Right cardiac atrium (tissue), 5 donors: ENCODE measurements at regions of chr20 and their contacts with region 1.

Region 1: GRCh38 chr20:54093423-54094267 is 23.3 kb upstream of the BCAS1 start:
- DNase-seq: no peak
- ATAC-seq: no peak
- H3K4me3 ChIP-seq: no peak overlapping the region
- H3K27ac ChIP-seq: no peak overlapping the region
- H3K4me1 ChIP-seq: no peaks in the 10 kb centered on the region
- H3K27me3 ChIP-seq: no peaks in the 10 kb centered on the region

Region 2: DNA sequence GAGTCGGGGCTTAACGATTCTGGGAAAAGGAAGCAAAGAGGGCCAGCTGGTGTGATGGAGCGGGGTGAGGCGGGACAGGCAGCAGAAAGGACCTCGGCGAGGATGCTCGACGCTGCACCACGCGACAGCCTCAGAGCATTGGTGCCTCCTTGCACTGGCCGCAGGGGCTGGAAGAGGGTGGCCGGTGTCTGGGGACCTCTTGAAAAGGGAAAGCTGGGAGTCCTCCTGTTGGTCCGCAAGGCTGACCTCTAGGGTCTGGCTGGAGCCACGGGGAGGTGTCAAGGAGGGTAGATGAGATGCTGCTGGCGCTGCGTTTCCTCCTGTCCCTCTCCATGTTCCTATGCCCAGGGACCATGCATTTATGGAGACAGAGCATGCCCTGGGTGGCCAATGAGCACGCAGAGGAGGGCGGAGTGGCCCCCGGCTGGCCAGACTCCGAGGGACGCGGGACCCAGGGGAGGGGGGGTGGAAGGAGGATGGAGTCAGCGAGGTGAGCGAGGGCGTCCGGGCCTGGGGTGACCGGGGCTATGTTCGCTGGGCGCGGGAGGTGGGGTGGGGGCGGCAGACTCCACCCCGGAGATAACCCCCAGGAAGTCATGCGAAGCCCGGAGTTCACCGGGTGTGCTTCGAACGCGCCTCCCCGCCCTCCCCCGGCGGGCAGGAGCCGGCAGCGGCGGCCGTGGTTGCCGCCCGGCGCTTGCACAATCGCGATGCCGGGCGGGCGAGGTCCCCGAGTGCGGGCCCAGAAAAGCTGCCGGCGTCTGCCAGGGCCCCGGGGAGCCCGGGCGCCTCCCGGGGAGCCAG is 80.2 kb after region 1 on chr20 and contains the start of gene CYP24A1:
- intact Hi-C with region 1: no loop called
- DNase-seq: peak; percentile 23 to 66 (median 47)
- ATAC-seq: peak; percentile 50 to 59
- H3K4me3 ChIP-seq: no peak within 1 kb of the TSS
- H3K27ac ChIP-seq: no peak within 1 kb of the TSS
- H3K4me1 ChIP-seq: no peaks in the 10 kb centered on the region
- H3K27me3 ChIP-seq: peaks cover 8% of the 10 kb centered on the region
- total RNA-seq, gene CYP24A1: not detected

Region 3: GRCh38 chr20:54199721-54200176 is 106.1 kb after region 1 on chr20:
- intact Hi-C with region 1: loop called in 3 of 4 experiments (anchors 2 to 5 kb)
- DNase-seq: peak; percentile 53 to 88 (median 87)
- ATAC-seq: peak; percentile 55 to 69
- H3K4me3 ChIP-seq: no peak overlapping the region
- H3K27ac ChIP-seq: no peak overlapping the region
- H3K4me1 ChIP-seq: no peaks in the 10 kb centered on the region
- H3K27me3 ChIP-seq: no peaks in the 10 kb centered on the region

Region 4: DNA sequence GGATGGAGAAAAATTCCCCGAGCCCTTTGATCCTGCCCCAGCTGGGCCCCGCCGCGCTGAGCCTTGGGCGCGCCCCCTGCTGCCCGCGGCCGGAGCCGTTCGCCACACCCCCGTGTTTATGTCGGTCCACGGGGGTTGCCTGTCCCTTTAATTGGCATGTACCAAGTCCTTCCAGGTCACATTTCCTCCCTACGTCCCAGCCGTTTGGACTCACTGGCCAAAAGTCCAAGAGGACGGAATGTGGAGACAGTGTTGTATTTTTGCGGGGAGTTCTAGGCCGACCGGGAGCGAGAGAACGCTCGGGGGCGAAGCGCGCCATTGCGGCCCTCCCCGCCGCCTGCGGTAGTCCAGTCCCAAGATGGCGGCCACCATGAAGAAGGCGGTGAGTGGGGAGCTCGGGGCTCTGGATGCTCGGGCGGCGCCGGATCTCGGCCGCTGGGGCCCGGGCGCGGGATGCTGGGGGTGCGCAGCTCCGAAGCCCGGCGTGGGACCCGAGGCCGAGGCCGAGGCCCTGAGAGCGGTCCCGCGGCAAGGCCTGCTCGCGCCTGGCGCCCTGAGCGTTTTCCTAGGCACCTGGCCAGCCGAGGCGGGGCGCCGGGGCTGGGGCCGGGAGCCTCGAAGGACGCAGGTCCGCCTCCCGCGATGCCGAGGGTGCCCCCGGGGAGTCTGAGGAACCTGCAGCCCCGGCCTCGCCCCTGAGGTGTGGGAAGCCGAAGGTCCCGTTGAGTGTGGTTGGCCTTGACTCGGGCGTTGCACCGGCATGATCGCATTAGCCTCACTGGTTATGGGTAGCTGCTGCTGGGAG is 114.3 kb after region 1 on chr20 and contains the start of gene PFDN4:
- intact Hi-C with region 1: loop called in 1 of 4 experiments (anchors 5 kb)
- DNase-seq: peak; percentile 84 to 94 (median 94)
- ATAC-seq: peak; percentile 97 to 98
- H3K4me3 ChIP-seq: peak within 1 kb of the TSS; percentile 90
- H3K27ac ChIP-seq: peak within 1 kb of the TSS; percentile 99
- H3K4me1 ChIP-seq: peaks cover 4% of the 10 kb centered on the region
- H3K27me3 ChIP-seq: no peaks in the 10 kb centered on the region
- total RNA-seq, gene PFDN4: 19.6 to 28.4 (median 25.6) TPM

Region 5: GRCh38 chr20:54633374-54634355 is 540.0 kb after region 1 on chr20:
- intact Hi-C with region 1: loop called in 1 of 4 experiments (anchors 10 kb)
- DNase-seq: no peak
- ATAC-seq: no peak
- H3K4me3 ChIP-seq: no peak overlapping the region
- H3K27ac ChIP-seq: no peak overlapping the region
- H3K4me1 ChIP-seq: no peaks in the 10 kb centered on the region
- H3K27me3 ChIP-seq: no peaks in the 10 kb centered on the region

Region 6: GRCh38 chr20:54649511-54649962 is 555.9 kb after region 1 on chr20:
- intact Hi-C with region 1: loop called in 2 of 4 experiments (anchors 5 kb)
- DNase-seq: peak; percentile 80 to 92 (median 86)
- ATAC-seq: peak; percentile 77 to 88
- H3K4me3 ChIP-seq: no peak overlapping the region
- H3K27ac ChIP-seq: no peak overlapping the region
- H3K4me1 ChIP-seq: no peaks in the 10 kb centered on the region
- H3K27me3 ChIP-seq: no peaks in the 10 kb centered on the region